ENCODE measurements at regions of chr12 and their contacts with region 1.

Region 1: GRCh38 chr12:131830335-131830913 is 2.2 kb downstream of the MMP17 start:
- DNase-seq: peak; percentile 56 to 92 (median 83)
- H3K4me3 ChIP-seq: peak overlapping the region; percentile 39 to 84 (median 68)
- H3K27ac ChIP-seq: peak overlapping the region; percentile 30 to 94 (median 85)
- H3K27me3 ChIP-seq: peaks cover 0 to 22% (median 0%) of the 10 kb centered on the region in 45 donors
- CTCF ChIP-seq: peak in 55 of 56 donors; percentile 46 to 88 (median 71)

Region 2: GRCh38 chr12:130916251-130916911 is 914.0 kb before region 1 on chr12:
- intact Hi-C with region 1: loop called (anchors 5 kb)
- DNase-seq: peak in 9 of 10 donors; percentile 47 to 79 (median 62)
- H3K4me3 ChIP-seq: peak overlapping the region in 57 of 59 donors; percentile 7 to 66 (median 45)
- H3K27ac ChIP-seq: peak overlapping the region in 5 of 59 donors; percentile 6 to 73 (median 30)
- H3K27me3 ChIP-seq: peaks cover 0 to 4% (median 0%) of the 10 kb centered on the region in 45 donors
- CTCF ChIP-seq: peak; percentile 76 to 98 (median 91)

Region 3: GRCh38 chr12:131104463-131105350 is 725.7 kb before region 1 on chr12:
- intact Hi-C with region 1: loop called in 1 of 2 experiments (anchors 2 kb)
- DNase-seq: peak; percentile 74 to 94 (median 90)
- H3K4me3 ChIP-seq: peak overlapping the region in 5 of 59 donors; percentile 10 to 28 (median 21)
- H3K27ac ChIP-seq: peak overlapping the region in 52 of 59 donors; percentile 20 to 88 (median 68)
- H3K27me3 ChIP-seq: peaks cover 0 to 3% (median 0%) of the 10 kb centered on the region in 45 donors
- CTCF ChIP-seq: peak; percentile 78 to 99 (median 96)

Region 4: GRCh38 chr12:131116391-131117117 is 713.9 kb before region 1 on chr12:
- intact Hi-C with region 1: loop called in 1 of 2 experiments (anchors 5 kb)
- DNase-seq: peak in 5 of 10 donors; percentile 23 to 53 (median 46)
- H3K4me3 ChIP-seq: peak overlapping the region in 5 of 59 donors; percentile 0 to 25 (median 19)
- H3K27ac ChIP-seq: peak overlapping the region in 35 of 59 donors; percentile 2 to 75 (median 35)
- H3K27me3 ChIP-seq: no peaks in the 10 kb centered on the region
- CTCF ChIP-seq: peak in 52 of 56 donors; percentile 22 to 68 (median 50)

Region 5: DNA sequence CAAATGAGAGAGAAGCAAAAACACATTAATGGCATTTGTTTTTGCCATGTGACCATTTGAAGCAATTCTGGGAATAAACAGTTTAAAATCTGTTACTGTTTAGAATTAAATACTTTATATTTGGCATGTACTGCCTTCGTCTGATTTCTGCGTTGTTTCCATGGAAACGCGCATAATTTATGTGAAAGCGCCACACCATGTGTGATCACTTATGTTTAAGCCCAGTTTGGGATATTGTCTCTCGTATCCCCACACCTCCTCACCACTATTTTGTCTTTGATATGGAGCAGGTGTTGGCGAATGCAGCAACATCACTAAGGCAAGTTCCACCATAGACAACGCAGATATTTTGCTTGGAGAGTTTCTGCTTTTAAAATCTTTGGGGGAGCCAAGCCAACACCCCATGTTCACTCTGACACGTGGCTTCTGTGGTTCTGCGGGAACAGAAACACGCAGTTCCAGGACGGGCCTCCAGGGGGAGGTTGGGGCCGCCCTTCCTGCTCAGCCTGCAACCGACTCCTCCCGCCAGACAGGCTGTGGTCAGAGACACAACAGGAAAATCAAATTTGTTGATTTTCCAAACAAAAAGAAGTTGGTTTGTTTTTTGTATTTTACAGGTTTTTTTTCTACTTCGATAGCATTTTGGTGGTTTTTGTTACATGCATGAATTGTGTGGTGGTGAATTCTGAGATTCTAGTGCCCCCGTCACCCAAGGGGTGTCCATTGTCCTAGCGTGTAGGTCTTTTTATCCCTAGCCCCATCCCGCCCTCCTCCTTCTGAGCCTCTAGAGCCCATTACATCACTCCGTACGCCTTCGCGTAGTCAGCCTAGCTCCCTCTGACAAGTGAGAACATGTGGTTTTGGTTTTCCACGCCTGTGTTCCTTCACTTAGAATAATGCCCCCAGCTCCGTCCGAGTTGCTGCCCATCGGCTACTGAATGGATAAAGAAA is 221.4 kb before region 1 on chr12:
- intact Hi-C with region 1: loop called (anchors 2 kb)
- DNase-seq: peak; percentile 81 to 89 (median 86)
- H3K4me3 ChIP-seq: peak overlapping the region in 23 of 59 donors; percentile 1 to 43 (median 13)
- H3K27ac ChIP-seq: peak overlapping the region in 40 of 59 donors; percentile 0 to 75 (median 52)
- H3K27me3 ChIP-seq: no peaks in the 10 kb centered on the region
- CTCF ChIP-seq: peak; percentile 69 to 99 (median 94)

Region 6: GRCh38 chr12:131735476-131736445 is 94.7 kb before region 1 on chr12:
- intact Hi-C with region 1: loop called in 1 of 2 experiments (anchors 1 kb)
- DNase-seq: peak in 1 of 10 donors; percentile 49
- H3K4me3 ChIP-seq: no peak overlapping the region
- H3K27ac ChIP-seq: peak overlapping the region in 54 of 59 donors; percentile 1 to 97 (median 89)
- H3K27me3 ChIP-seq: no peaks in the 10 kb centered on the region
- CTCF ChIP-seq: peak in 35 of 56 donors; percentile 14 to 57 (median 29)

Region 7: DNA sequence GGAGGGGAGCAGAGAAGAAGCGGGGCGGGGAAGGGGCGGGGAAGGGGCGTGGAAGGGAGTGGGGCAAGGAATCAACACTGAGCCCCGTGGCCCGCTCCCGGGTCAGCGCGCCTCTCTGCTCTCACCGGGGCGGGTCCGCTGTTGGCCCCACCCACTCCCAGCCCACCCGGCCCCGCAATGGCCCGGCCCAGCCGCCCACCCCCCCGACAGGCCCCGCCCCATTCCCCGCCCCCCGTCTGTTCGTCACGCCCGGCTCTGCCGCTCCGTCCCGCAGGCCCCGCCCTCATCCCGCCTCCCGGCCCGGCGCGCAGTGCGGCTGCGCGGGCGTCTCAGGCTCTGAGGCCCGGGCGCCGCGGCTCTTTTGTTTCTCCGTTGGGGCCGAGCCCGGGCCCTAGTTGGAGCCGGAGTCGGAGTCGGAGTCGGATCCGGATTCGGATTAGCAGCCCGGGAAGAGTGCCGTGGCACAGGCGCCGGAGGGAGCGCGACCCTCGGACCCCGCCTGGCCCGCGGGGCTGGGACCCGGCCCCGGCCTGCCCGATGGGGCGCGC is 64.0 kb after region 1 on chr12 and contains the start of gene ULK1:
- intact Hi-C with region 1: loop called in 1 of 2 experiments (anchors 5 kb)
- DNase-seq: peak; percentile 86 to 97 (median 92)
- H3K4me3 ChIP-seq: peak within 1 kb of the TSS; percentile 54 to 92 (median 71)
- H3K27ac ChIP-seq: peak within 1 kb of the TSS in 58 of 59 donors; percentile 49 to 99 (median 95)
- H3K27me3 ChIP-seq: no peaks in the 10 kb centered on the region
- CTCF ChIP-seq: peak in 5 of 56 donors; percentile 8 to 20 (median 12)
- total RNA-seq, gene ULK1: 43.7 to 169 (median 98.4) TPM